CD4-positive, alpha-beta memory T cell (primary cell): ENCODE measurements at regions of chr3 and their contacts with region 1.

Region 1: DNA sequence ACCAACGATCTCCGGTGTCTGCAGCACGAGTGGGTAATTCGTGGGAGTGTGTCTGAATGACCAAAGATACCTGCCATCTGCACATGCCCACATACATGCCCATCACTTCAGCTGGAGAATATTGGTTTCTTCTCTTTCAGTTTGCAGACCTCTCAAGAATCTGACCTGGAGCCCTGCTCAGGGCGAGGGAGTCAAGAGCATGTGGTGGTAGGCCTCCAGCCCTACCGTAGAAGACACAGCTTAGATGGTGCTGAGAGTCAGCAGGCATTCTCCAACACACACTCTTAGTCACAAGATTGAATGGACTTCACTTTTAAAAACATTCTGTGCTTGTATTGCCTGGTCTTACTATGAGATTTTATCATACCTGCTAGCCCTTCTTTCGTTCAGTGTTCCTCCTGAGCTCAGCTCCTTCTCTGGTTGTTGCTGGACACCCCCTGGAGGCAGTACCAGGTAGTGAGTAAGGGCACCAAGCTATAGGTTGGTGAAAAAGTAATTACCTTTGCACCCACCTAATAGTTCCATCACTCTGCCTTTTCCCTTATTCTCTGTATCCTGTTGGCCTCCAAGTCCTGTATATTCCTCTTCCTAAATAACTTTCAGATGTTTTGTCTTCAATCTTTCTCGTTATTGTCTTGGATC is 252.0 kb downstream of the CACNA2D3 start:
- DNase-seq: no peak
- H3K4me3 ChIP-seq: no peak overlapping the region
- H3K4me3 Mint-ChIP-seq: no peak overlapping the region
- H3K27ac ChIP-seq: no peak overlapping the region
- H3K27ac Mint-ChIP-seq: no peak overlapping the region
- H3K4me1 ChIP-seq: no peaks in the 10 kb centered on the region
- H3K4me1 Mint-ChIP-seq: no peaks in the 10 kb centered on the region
- H3K27me3 ChIP-seq: no peaks in the 10 kb centered on the region
- H3K27me3 Mint-ChIP-seq: peaks cover 2 to 3% of the 10 kb centered on the region in 2 donors

Region 2: GRCh38 chr3:54408328-54408727 is 34.0 kb after region 1 on chr3:
- CTCF ChIA-PET with region 1: no interaction called
- POLR2A ChIA-PET with region 1: no interaction called
- intact Hi-C with region 1: loop called (anchors 1 kb)
- DNase-seq: no peak
- H3K4me3 ChIP-seq: no peak overlapping the region
- H3K4me3 Mint-ChIP-seq: no peak overlapping the region
- H3K27ac ChIP-seq: no peak overlapping the region
- H3K27ac Mint-ChIP-seq: no peak overlapping the region
- H3K4me1 ChIP-seq: no peaks in the 10 kb centered on the region
- H3K4me1 Mint-ChIP-seq: no peaks in the 10 kb centered on the region
- H3K27me3 ChIP-seq: no peaks in the 10 kb centered on the region
- H3K27me3 Mint-ChIP-seq: no peaks in the 10 kb centered on the region

Region 3: DNA sequence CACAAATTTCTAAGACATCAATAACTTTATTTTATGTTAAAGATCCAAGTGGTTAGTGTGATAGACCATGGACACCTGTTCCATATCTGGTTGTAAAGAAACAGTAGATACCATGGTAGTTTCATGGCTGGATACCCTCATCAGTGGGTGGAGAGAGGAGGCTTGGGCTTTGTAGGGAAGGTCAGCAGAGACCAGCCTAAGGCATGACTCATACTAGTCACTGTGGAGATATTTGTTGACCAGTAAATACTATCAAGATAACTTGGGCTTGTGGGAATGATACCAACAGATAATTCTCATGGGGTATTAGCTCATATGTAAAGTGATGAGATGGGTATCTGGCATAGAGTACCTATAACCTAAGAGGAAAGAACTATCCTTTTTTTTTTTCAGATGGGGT is 102.5 kb after region 1 on chr3:
- CTCF ChIA-PET with region 1: no interaction called
- POLR2A ChIA-PET with region 1: no interaction called
- intact Hi-C with region 1: no loop called
- DNase-seq: no peak
- H3K4me3 ChIP-seq: no peak overlapping the region
- H3K4me3 Mint-ChIP-seq: no peak overlapping the region
- H3K27ac ChIP-seq: no peak overlapping the region
- H3K27ac Mint-ChIP-seq: no peak overlapping the region
- H3K4me1 ChIP-seq: no peaks in the 10 kb centered on the region
- H3K4me1 Mint-ChIP-seq: no peaks in the 10 kb centered on the region
- H3K27me3 ChIP-seq: no peaks in the 10 kb centered on the region
- H3K27me3 Mint-ChIP-seq: no peaks in the 10 kb centered on the region